Ascending aorta (tissue), 2 donors: ENCODE measurements at regions of chr2 and their contacts with region 1.

Region 1: GRCh38 chr2:127479219-127479825 is 47.0 kb downstream of the IWS1 start:
- DNase-seq: no peak
- H3K4me3 ChIP-seq: no peak overlapping the region
- H3K27ac ChIP-seq: no peak overlapping the region
- H3K4me1 ChIP-seq: no peaks in the 10 kb centered on the region
- H3K27me3 ChIP-seq: no peaks in the 10 kb centered on the region
- CTCF ChIP-seq: peak; percentile 26 to 66 (median 65)

Region 2: GRCh38 chr2:127324635-127325034 is 154.7 kb before region 1 on chr2:
- intact Hi-C with region 1: loop called (anchors 1 kb)
- DNase-seq: no peak
- H3K4me3 ChIP-seq: no peak overlapping the region
- H3K27ac ChIP-seq: no peak overlapping the region
- H3K4me1 ChIP-seq: no peaks in the 10 kb centered on the region
- H3K27me3 ChIP-seq: no peaks in the 10 kb centered on the region
- CTCF ChIP-seq: peak; percentile 35 to 67 (median 41)

Region 3: DNA sequence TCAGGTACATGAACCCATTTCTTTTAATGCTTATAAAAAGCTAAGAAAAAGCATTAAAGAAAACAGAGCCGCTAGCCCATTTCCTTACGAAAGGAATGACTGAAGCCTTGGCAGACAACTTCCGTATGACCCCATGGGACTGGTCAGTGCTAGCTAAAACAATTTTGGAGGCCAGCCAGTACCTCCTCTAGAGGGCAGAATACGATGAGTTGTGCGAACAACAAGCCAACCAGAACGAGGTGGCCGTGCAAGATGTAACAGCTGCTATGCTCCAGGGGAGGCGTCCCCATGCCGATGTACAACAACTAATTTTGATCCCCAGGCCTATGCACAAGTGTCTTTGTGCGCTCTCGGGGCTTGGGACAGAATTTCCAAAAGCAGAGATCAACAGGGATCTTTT is 108.3 kb before region 1 on chr2:
- intact Hi-C with region 1: loop called (anchors 5 kb)
- DNase-seq: peak in 1 of 2 donors; percentile 91
- H3K4me3 ChIP-seq: peak overlapping the region in 1 of 2 donors; percentile 12
- H3K27ac ChIP-seq: peak overlapping the region; percentile 49 to 51
- H3K4me1 ChIP-seq: peaks cover 0 to 13% of the 10 kb centered on the region in 2 donors
- H3K27me3 ChIP-seq: no peaks in the 10 kb centered on the region
- CTCF ChIP-seq: no peak

Region 4: GRCh38 chr2:127437781-127438726 is 41.3 kb before region 1 on chr2:
- intact Hi-C with region 1: no loop called
- DNase-seq: no peak
- H3K4me3 ChIP-seq: no peak overlapping the region
- H3K27ac ChIP-seq: no peak overlapping the region
- H3K4me1 ChIP-seq: no peaks in the 10 kb centered on the region
- H3K27me3 ChIP-seq: no peaks in the 10 kb centered on the region
- CTCF ChIP-seq: no peak